CD4-positive, alpha-beta T cell (primary cell): ENCODE measurements at regions of chr2 and their contacts with region 1.

Region 1: DNA sequence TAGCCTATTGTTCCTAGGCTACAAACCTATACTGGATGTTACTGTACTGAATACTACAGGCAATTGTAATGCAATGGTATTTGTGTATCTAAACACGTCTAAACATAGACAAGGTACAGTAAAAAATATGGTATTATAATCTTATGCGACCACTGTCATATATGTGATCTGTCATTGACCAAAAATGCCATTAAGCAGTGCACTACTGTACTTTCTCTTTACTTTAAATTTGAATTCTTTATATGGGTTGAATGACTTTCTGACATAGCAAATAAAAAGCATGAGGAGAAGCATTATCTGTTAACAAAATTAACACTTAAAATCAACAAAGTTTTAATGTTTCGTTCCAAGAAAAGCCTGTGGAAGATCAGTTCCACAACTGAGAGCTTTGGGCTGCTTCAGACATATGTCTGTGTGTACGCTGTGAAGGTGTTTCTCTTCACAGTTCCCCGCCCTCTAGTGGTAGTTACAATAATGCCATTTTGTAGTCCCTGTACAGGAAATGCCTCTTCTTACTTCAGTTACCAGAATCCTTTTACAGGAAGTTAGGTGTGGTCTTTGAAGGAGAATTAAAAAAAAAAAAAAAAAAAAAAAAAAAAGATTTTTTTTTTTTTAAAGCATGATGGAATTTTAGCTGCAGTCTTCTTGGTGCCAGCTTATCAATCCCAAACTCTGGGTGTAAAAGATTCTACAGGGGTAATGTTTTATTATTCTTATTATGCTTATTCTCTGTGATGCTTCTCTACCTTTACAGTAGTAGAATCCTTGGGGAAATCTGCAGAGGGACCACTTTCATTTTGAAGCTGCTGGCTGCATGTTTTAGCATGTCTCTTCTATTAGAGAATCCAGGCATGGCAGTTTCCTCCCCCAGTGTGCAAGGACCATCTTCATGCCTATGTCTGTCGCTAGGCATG is 54.5 kb downstream of the SCN2A start:
- DNase-seq: peak in 9 of 14 experiments; percentile 3 to 89 (median 37)
- ATAC-seq: peak; percentile 100
- H3K4me3 ChIP-seq: no peak overlapping the region
- H3K4me3 Mint-ChIP-seq: peak overlapping the region; percentile 18
- H3K27ac ChIP-seq: no peak overlapping the region
- H3K27ac Mint-ChIP-seq: no peak overlapping the region
- H3K4me1 ChIP-seq: no peaks in the 10 kb centered on the region
- H3K4me1 Mint-ChIP-seq: peaks cover 10% of the 10 kb centered on the region
- H3K27me3 ChIP-seq: no peaks in the 10 kb centered on the region
- H3K27me3 Mint-ChIP-seq: peaks cover 4% of the 10 kb centered on the region
- CTCF ChIP-seq: peak; percentile 76

Region 2: GRCh38 chr2:164992818-164993217 is 300.9 kb before region 1 on chr2:
- CTCF ChIA-PET with region 1: no interaction called
- POLR2A ChIA-PET with region 1: no interaction called
- intact Hi-C with region 1: loop called in 1 of 2 experiments (anchors 5 kb)
- DNase-seq: peak in 8 of 14 experiments; percentile 6 to 73 (median 26)
- ATAC-seq: peak; percentile 57
- H3K4me3 ChIP-seq: no peak overlapping the region
- H3K4me3 Mint-ChIP-seq: no peak overlapping the region
- H3K27ac ChIP-seq: no peak overlapping the region
- H3K27ac Mint-ChIP-seq: no peak overlapping the region
- H3K4me1 ChIP-seq: peaks cover 3% of the 10 kb centered on the region
- H3K4me1 Mint-ChIP-seq: peaks cover 7% of the 10 kb centered on the region
- H3K27me3 ChIP-seq: no peaks in the 10 kb centered on the region
- H3K27me3 Mint-ChIP-seq: no peaks in the 10 kb centered on the region
- CTCF ChIP-seq: peak; percentile 54

Region 3: DNA sequence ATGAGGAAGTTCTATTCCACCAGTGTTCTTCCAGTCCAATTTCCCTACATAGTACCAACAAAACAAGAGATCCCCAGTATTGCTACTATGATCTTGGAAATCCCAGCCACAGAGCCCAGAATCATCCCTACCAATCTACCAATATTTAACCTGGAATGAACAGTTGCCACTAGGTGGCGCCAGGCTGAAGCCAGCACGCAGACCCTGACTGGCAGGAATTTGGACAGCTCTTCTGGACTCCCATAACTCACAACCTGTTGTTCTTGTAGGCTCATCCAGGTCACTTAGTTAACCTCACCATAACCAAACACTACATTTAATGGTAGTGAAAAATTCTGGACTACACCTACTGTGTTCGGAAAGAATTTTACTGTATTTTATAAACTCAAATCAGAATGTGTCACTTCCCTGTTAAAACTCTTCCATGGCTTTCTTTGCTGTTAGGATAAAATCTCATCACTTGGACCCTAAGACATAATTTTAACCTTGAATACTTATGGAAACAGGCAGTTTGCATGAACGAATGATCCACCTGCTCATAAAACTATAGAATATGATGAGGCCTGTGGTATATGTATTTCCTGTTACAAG is 278.6 kb before region 1 on chr2:
- CTCF ChIA-PET with region 1: no interaction called
- POLR2A ChIA-PET with region 1: no interaction called
- intact Hi-C with region 1: loop called in 1 of 2 experiments (anchors 1 kb)
- DNase-seq: peak; percentile 9 to 66 (median 24)
- ATAC-seq: no peak
- H3K4me3 ChIP-seq: no peak overlapping the region
- H3K4me3 Mint-ChIP-seq: no peak overlapping the region
- H3K27ac ChIP-seq: no peak overlapping the region
- H3K27ac Mint-ChIP-seq: no peak overlapping the region
- H3K4me1 ChIP-seq: no peaks in the 10 kb centered on the region
- H3K4me1 Mint-ChIP-seq: no peaks in the 10 kb centered on the region
- H3K27me3 ChIP-seq: no peaks in the 10 kb centered on the region
- H3K27me3 Mint-ChIP-seq: peaks cover 8% of the 10 kb centered on the region
- CTCF ChIP-seq: peak; percentile 75

Region 4: DNA sequence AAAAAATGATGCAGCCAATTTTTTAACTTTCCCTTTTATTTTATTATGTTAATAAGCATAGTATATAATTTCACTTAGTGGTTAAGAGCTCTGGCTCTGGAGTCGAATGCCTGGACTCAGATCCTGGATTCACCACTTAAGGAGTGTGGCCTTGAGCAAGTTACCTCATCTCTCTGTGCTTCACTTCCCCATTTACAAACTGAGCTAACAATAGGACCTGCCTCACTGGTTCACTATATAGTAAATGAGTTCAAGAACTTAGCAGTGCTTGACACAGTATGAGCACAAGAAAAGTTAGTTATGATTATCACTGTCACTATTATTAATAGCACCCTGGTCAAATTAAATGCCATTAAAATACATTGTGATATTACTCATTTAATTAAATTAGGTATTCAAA is 120.5 kb before region 1 on chr2:
- CTCF ChIA-PET with region 1: no interaction called
- POLR2A ChIA-PET with region 1: no interaction called
- intact Hi-C with region 1: no loop called
- DNase-seq: no peak
- ATAC-seq: no peak
- H3K4me3 ChIP-seq: no peak overlapping the region
- H3K4me3 Mint-ChIP-seq: no peak overlapping the region
- H3K27ac ChIP-seq: no peak overlapping the region
- H3K27ac Mint-ChIP-seq: no peak overlapping the region
- H3K4me1 ChIP-seq: no peaks in the 10 kb centered on the region
- H3K4me1 Mint-ChIP-seq: no peaks in the 10 kb centered on the region
- H3K27me3 ChIP-seq: no peaks in the 10 kb centered on the region
- H3K27me3 Mint-ChIP-seq: no peaks in the 10 kb centered on the region
- CTCF ChIP-seq: no peak

Region 5: DNA sequence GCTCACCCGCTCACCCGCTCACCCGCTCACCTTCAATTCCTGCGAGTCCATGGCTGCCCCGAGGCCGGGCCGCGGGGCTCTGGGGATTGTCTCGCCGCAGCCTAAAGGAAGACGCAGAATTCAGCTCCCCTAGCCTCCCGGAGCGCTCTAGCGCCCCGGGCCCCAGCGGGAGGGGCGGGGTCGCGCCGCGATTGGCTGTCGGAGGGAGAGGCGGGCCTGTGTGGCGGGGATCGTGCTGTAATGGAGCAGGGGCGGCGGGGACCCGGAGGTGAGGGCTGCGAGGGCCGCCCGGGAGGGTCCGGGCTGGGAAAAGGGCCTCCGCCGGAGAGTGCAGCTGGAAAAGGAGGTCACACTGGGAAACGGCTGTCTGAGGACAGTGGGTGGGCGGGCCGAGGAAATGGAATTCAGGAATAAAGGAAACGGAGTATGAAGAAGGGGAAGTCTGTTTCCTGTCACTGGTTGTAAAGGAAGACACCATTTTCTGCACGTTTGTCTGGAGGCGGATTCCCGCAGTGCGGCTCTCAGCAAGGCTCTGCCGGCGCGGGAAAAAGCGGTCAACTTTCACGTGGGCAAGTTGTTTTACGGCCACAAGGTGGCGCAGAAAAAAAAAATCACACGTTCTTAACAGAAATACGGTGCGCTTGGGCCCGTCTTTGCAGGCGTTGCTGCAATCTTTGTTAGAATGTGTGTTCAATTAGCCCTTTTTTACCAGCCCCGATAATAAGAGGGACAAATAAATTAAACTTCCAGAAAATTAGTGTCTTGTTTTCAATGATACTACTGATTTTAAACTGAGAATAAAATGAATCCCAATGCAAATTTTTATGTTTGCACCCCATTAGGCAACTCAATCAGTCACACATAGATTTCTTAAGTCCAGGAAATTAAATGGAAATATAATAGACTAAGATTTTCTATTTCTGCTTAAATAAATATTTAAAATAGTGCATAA is 660.2 kb after region 1 on chr2 and contains the start of gene TTC21B:
- CTCF ChIA-PET with region 1: no interaction called
- POLR2A ChIA-PET with region 1: no interaction called
- intact Hi-C with region 1: loop called (anchors 5 kb)
- DNase-seq: peak; percentile 86 to 96 (median 93)
- ATAC-seq: peak; percentile 94
- H3K4me3 ChIP-seq: peak within 1 kb of the TSS; percentile 74
- H3K4me3 Mint-ChIP-seq: peak within 1 kb of the TSS; percentile 76
- H3K27ac ChIP-seq: peak within 1 kb of the TSS; percentile 61 to 81
- H3K27ac Mint-ChIP-seq: no peak within 1 kb of the TSS
- H3K4me1 ChIP-seq: peaks cover 25% of the 10 kb centered on the region
- H3K4me1 Mint-ChIP-seq: peaks cover 20% of the 10 kb centered on the region
- H3K27me3 ChIP-seq: no peaks in the 10 kb centered on the region
- H3K27me3 Mint-ChIP-seq: no peaks in the 10 kb centered on the region
- CTCF ChIP-seq: peak; percentile 82
- total RNA-seq, gene TTC21B: 22.9 to 25.4 TPM